ENCODE measurements at regions of chr19 and their contacts with region 1.

Region 1: GRCh38 chr19:32674959-32675719 is at the start of gene ANKRD27:
- H3K4me3 Mint-ChIP-seq: peak within 1 kb of the TSS; percentile 90
- H3K27ac Mint-ChIP-seq: peak within 1 kb of the TSS; percentile 75
- H3K4me1 Mint-ChIP-seq: peaks cover 43% of the 10 kb centered on the region
- H3K27me3 Mint-ChIP-seq: peaks cover 44% of the 10 kb centered on the region

Region 2: DNA sequence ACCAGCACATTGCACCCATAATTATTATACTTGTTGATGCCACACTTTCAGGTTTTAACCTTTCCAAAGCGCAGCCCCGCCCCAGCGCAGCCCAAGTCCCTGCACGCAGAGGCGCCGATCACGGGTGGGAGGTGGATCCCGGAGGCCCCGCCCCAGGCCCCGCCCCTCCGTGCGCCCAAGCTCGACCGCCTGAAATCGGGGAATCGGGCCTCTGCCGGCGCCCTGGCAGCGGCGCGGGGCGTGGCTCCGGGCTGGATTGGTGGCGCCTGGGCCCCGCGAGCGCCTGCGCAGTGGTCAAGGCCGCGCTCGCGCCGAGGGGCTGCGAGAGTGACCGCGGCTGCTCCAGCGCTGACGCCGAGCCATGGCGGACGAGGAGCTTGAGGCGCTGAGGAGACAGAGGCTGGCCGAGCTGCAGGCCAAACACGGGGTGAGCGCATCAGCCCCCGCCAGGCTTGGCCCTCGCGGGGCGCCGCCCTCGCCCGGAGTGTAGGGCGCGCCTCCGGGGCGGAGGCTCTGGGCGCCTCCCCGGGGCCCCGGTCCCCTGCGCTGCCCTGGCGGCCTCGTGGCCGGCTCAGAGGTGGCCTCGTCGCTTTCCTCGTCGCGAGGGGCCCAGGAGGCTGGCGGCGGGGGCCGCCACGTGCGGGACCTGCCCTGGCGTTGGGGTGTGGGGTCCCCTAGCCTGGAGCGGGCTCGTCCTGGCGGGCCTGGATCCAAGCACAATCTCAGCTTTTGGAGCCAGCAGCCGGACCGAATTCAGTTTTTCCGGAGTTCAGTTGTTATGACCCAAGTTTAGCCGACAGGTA is 94.0 kb before region 1 on chr19 and contains the start of gene PDCD5:
- intact Hi-C with region 1: loop called (anchors 5 kb)
- H3K4me3 Mint-ChIP-seq: peak within 1 kb of the TSS; percentile 94
- H3K27ac Mint-ChIP-seq: peak within 1 kb of the TSS; percentile 87
- H3K4me1 Mint-ChIP-seq: peaks cover 14% of the 10 kb centered on the region
- H3K27me3 Mint-ChIP-seq: peaks cover 14% of the 10 kb centered on the region

Region 3: DNA sequence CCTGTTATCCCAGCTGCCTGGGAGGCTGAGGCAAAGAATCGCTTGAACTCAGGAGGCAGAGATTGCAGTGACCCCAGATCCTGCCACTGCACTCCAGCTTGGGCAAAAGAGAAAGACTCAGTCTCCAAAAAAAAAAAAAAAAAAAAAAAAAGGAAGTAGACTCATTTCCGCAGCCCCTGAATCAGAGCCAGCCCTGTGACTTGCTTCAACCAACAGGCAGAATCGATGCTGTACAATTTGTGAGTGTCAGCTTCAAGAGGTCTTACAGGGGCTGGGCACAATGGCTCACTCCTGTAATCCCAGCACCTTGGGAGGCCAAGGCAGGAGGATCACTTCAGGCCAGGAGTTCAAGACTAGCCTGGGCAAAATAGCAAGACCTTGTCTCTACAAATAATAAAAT is 13.0 kb before region 1 on chr19:
- intact Hi-C with region 1: no loop called
- H3K4me3 Mint-ChIP-seq: no peak overlapping the region
- H3K27ac Mint-ChIP-seq: peak overlapping the region; percentile 60
- H3K4me1 Mint-ChIP-seq: peaks cover 22% of the 10 kb centered on the region
- H3K27me3 Mint-ChIP-seq: no peaks in the 10 kb centered on the region

Measured in dendritic cell treated with granulocyte-macrophage colony-stimulating factor and Interleukin-4, amounts not matched to agents 40 ng/mL and 50 ng/mL, for 4 days (primary cell).